ENCODE measurements at regions of chr12 and their contacts with region 1.

Region 1: GRCh38 chr12:7188562-7189397 is 706 bp upstream of the PEX5 start:
- DNase-seq: peak; percentile 36 to 76 (median 63)
- ATAC-seq: peak; percentile 32
- H3K4me3 ChIP-seq: peak overlapping the region; percentile 85 to 86
- H3K4me3 Mint-ChIP-seq: peak overlapping the region; percentile 95
- H3K27ac ChIP-seq: peak overlapping the region; percentile 66 to 90
- H3K27ac Mint-ChIP-seq: peak overlapping the region; percentile 97
- H3K4me1 ChIP-seq: peaks cover 26% of the 10 kb centered on the region
- H3K4me1 Mint-ChIP-seq: peaks cover 44% of the 10 kb centered on the region
- H3K27me3 ChIP-seq: no peaks in the 10 kb centered on the region
- H3K27me3 Mint-ChIP-seq: no peaks in the 10 kb centered on the region
- CTCF ChIP-seq: peak; percentile 63

Region 2: GRCh38 chr12:6904280-6905278 is 284.2 kb before region 1 on chr12 and contains the start of gene LRRC23:
- CTCF ChIA-PET with region 1: no interaction called
- POLR2A ChIA-PET with region 1: no interaction called
- intact Hi-C with region 1: loop called (anchors 1 to 5 kb)
- DNase-seq: peak; percentile 92 to 99 (median 97)
- ATAC-seq: peak; percentile 96
- H3K4me3 ChIP-seq: peak within 1 kb of the TSS; percentile 56 to 64
- H3K4me3 Mint-ChIP-seq: peak within 1 kb of the TSS; percentile 5
- H3K27ac ChIP-seq: peak within 1 kb of the TSS; percentile 86 to 88
- H3K27ac Mint-ChIP-seq: no peak within 1 kb of the TSS
- H3K4me1 ChIP-seq: peaks cover 15% of the 10 kb centered on the region
- H3K4me1 Mint-ChIP-seq: no peaks in the 10 kb centered on the region
- H3K27me3 ChIP-seq: no peaks in the 10 kb centered on the region
- H3K27me3 Mint-ChIP-seq: no peaks in the 10 kb centered on the region
- CTCF ChIP-seq: no peak
- total RNA-seq, gene LRRC23: 6.5 to 7.2 TPM

Region 3: DNA sequence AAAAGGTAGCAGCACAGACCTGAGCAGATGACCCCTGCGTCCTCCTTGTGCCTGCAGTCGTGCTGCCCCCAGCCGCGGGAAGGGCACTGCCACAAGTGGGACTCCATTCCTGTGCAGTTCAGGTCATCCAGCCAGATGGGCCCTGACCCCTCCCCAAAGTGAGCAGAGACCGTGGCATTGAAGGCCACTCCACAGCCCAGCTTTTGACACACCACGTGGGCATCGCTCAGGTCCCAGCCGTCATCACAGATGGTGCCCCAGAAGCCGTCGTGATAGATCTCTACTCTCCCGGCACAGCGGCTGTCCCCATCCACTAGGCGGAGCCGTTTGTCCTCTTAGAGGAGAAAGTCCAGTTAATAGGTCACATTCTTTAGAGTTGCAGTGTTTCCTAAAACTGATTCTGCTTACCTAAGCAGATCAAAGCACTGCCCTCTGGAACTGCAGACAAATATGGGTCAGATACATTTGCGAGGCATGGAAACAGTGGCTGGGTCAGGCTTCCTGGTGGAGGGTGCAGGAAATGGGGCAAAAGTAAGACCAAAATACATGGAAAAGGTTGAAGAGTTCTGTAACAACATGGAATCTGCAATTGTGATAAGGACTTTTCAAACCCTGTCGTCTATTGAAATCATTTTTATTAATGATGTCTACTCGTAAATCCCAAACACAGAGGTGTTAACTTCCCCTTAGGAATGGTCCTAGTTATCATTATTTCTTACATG is 185.8 kb after region 1 on chr12:
- CTCF ChIA-PET with region 1: no interaction called
- POLR2A ChIA-PET with region 1: no interaction called
- intact Hi-C with region 1: no loop called
- DNase-seq: peak in 3 of 9 experiments; percentile 9 to 17 (median 16)
- ATAC-seq: no peak
- H3K4me3 ChIP-seq: no peak overlapping the region
- H3K4me3 Mint-ChIP-seq: no peak overlapping the region
- H3K27ac ChIP-seq: no peak overlapping the region
- H3K27ac Mint-ChIP-seq: no peak overlapping the region
- H3K4me1 ChIP-seq: no peaks in the 10 kb centered on the region
- H3K4me1 Mint-ChIP-seq: no peaks in the 10 kb centered on the region
- H3K27me3 ChIP-seq: peaks cover 3 to 4% of the 10 kb centered on the region in 2 experiments
- H3K27me3 Mint-ChIP-seq: peaks cover 24% of the 10 kb centered on the region
- CTCF ChIP-seq: no peak

Region 4: GRCh38 chr12:7781283-7781682 is 592.5 kb after region 1 on chr12:
- CTCF ChIA-PET with region 1: no interaction called
- POLR2A ChIA-PET with region 1: no interaction called
- intact Hi-C with region 1: no loop called
- DNase-seq: no peak
- ATAC-seq: no peak
- H3K4me3 ChIP-seq: no peak overlapping the region
- H3K4me3 Mint-ChIP-seq: no peak overlapping the region
- H3K27ac ChIP-seq: no peak overlapping the region
- H3K27ac Mint-ChIP-seq: no peak overlapping the region
- H3K4me1 ChIP-seq: no peaks in the 10 kb centered on the region
- H3K4me1 Mint-ChIP-seq: no peaks in the 10 kb centered on the region
- H3K27me3 ChIP-seq: no peaks in the 10 kb centered on the region
- H3K27me3 Mint-ChIP-seq: peaks cover 2% of the 10 kb centered on the region
- CTCF ChIP-seq: no peak

Measured in CD8-positive, alpha-beta T cell (primary cell).